ENCODE measurements at regions of chr7 and their contacts with region 1.

Region 1: GRCh38 chr7:91034459-91035368 is 229.5 kb upstream of the FZD1 start:
- DNase-seq: peak in 2 of 14 experiments; percentile 6 to 9
- ATAC-seq: no peak
- H3K4me3 ChIP-seq: no peak overlapping the region
- H3K4me3 Mint-ChIP-seq: no peak overlapping the region
- H3K27ac ChIP-seq: no peak overlapping the region
- H3K27ac Mint-ChIP-seq: no peak overlapping the region
- H3K4me1 ChIP-seq: no peaks in the 10 kb centered on the region
- H3K4me1 Mint-ChIP-seq: no peaks in the 10 kb centered on the region
- H3K27me3 ChIP-seq: no peaks in the 10 kb centered on the region
- H3K27me3 Mint-ChIP-seq: no peaks in the 10 kb centered on the region
- CTCF ChIP-seq: no peak

Region 2: GRCh38 chr7:90455163-90456030 is 579.3 kb before region 1 on chr7:
- CTCF ChIA-PET with region 1: no interaction called
- POLR2A ChIA-PET with region 1: no interaction called
- intact Hi-C with region 1: loop called in 1 of 2 experiments (anchors 10 kb)
- DNase-seq: peak in 3 of 14 experiments; percentile 52 to 60 (median 56)
- ATAC-seq: peak; percentile 72
- H3K4me3 ChIP-seq: no peak overlapping the region
- H3K4me3 Mint-ChIP-seq: no peak overlapping the region
- H3K27ac ChIP-seq: no peak overlapping the region
- H3K27ac Mint-ChIP-seq: no peak overlapping the region
- H3K4me1 ChIP-seq: no peaks in the 10 kb centered on the region
- H3K4me1 Mint-ChIP-seq: peaks cover 6% of the 10 kb centered on the region
- H3K27me3 ChIP-seq: no peaks in the 10 kb centered on the region
- H3K27me3 Mint-ChIP-seq: peaks cover 13% of the 10 kb centered on the region
- CTCF ChIP-seq: peak; percentile 67

Region 3: GRCh38 chr7:90843472-90843871 is 191.2 kb before region 1 on chr7:
- CTCF ChIA-PET with region 1: no interaction called
- POLR2A ChIA-PET with region 1: no interaction called
- intact Hi-C with region 1: no loop called
- DNase-seq: no peak
- ATAC-seq: no peak
- H3K4me3 ChIP-seq: no peak overlapping the region
- H3K4me3 Mint-ChIP-seq: no peak overlapping the region
- H3K27ac ChIP-seq: no peak overlapping the region
- H3K27ac Mint-ChIP-seq: no peak overlapping the region
- H3K4me1 ChIP-seq: no peaks in the 10 kb centered on the region
- H3K4me1 Mint-ChIP-seq: no peaks in the 10 kb centered on the region
- H3K27me3 ChIP-seq: no peaks in the 10 kb centered on the region
- H3K27me3 Mint-ChIP-seq: no peaks in the 10 kb centered on the region
- CTCF ChIP-seq: no peak

Measured in CD4-positive, alpha-beta T cell (primary cell).